HCT116 (cell line): ENCODE measurements at regions of chr12 and their contacts with region 1.

Region 1: GRCh38 chr12:14239350-14239934 is 126.0 kb upstream of the ATF7IP start:
- DNase-seq: no peak
- ATAC-seq: peak; percentile 67; the same call in 1 of the 2 replicates
- H3K4me3 ChIP-seq: no peak overlapping the region
- H3K27ac ChIP-seq: no peak overlapping the region
- H3K4me1 ChIP-seq: no peaks in the 10 kb centered on the region; a peak in 1 of 4 replicates
- H3K27me3 ChIP-seq: no peaks in the 10 kb centered on the region
- CTCF ChIP-seq: no peak
- POLR2A ChIP-seq: no peak
- RAD21 ChIP-seq: no peak

Region 2: DNA sequence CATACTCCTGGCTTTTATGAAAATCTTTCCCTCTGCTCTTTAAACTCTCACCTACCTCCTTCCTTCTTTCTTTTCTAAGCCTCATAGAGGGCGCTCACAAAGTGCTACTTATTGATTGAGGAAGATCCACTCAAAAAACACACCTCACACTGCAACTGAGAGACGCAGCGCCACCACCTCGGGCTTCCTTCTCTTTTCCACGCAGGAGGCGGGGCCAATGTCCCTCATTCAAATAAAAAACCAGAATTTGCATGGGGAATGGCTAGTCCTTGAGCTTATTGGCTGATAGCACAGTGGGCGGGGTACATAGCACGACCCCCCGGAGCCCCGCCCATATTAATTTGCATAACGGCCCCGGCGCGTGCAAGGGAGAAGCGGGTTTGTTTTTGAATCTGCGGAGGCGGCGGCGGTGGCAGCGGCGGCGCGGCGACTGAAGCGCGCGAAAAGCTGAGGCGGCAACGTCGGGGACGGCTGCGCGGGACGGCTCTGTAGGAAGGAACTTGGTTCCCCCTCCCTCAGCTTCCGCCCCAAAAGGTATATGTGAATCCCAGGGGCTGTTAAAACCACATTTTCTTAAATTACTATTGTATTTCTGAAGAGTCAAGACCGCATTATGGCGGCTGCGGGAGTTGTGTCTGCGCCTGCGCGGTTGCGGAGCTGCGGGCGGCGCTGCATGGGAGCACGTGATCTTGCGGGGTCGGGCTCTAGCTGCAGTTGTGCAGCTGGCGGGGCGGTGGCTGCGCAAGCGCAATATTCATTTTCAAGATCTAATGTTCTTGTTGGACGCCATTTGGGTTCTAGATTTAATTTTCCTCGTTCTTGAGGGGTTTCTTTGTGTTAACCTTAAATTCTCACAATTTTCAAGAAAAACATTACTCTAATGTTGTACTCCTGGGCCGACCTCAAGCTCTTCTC is 126.1 kb after region 1 on chr12 and contains the start of gene ATF7IP:
- CTCF ChIA-PET with region 1: interaction called, 9 read pairs
- POLR2A ChIA-PET with region 1: interaction called, 3 read pairs
- RAD21 ChIA-PET with region 1: interaction called, 4 to 8 read pairs
- intact Hi-C with region 1: loop called (anchors 1 kb)
- DNase-seq: peak; percentile 90
- ATAC-seq: peak; percentile 96
- H3K4me3 ChIP-seq: peak within 1 kb of the TSS; percentile 50 to 51
- H3K27ac ChIP-seq: peak within 1 kb of the TSS; percentile 99
- H3K4me1 ChIP-seq: peaks cover 2 to 25% of the 10 kb centered on the region in 2 experiments; a peak in 3 of 4 replicates
- H3K27me3 ChIP-seq: no peaks in the 10 kb centered on the region
- CTCF ChIP-seq: peak; percentile 15 to 41 (median 36); a peak in 3 of 6 replicates
- POLR2A ChIP-seq: no peak
- RAD21 ChIP-seq: peak; percentile 35
- total RNA-seq, gene ATF7IP: 38.6 TPM

Region 3: DNA sequence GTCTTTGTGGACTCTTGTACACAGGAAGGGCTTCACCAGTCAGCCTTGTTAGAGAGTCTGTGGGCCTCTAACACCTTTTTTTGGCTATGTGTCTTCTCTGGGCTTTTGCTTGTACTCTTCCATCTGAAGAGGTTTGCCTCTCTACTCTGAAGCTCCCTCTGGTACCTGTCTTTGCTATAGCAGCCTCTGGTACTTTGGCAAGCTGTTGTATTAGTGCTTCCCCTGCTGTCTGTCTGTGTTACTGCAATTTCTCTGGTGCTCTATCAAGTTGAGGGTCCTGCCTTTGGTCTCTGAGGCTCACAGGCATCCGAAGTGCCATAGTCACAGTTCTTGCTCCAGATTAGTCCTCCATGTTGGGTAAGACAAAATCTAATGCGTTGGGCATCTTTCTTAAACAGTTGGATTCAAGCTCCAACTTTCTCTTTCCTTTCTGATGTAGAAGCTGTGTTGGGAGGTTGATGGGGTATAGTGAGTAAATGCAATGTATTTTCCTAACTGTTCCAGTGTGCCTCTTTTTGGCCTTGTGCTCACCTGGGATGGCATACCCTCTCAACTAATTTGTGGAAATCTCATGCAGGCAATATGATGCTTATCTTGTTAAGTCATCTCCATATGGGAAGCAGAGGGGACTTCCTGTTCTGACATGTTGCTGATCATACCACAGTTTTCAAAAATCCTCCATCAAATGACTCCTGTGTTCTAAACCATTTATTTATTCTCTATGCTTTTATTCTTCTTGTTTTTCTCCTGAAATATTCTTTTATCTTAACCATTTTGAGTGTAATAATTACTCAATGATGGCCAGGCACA is 214.9 kb after region 1 on chr12:
- CTCF ChIA-PET with region 1: interaction called, 51 read pairs
- POLR2A ChIA-PET with region 1: no interaction called
- RAD21 ChIA-PET with region 1: interaction called, 6 to 10 read pairs
- intact Hi-C with region 1: loop called (anchors 1 kb)
- DNase-seq: peak; percentile 59
- ATAC-seq: peak; percentile 88
- H3K4me3 ChIP-seq: no peak overlapping the region
- H3K27ac ChIP-seq: no peak overlapping the region
- H3K4me1 ChIP-seq: no peaks in the 10 kb centered on the region
- H3K27me3 ChIP-seq: no peaks in the 10 kb centered on the region
- CTCF ChIP-seq: peak; percentile 86 to 98 (median 88)
- POLR2A ChIP-seq: no peak
- RAD21 ChIP-seq: peak; percentile 91

Region 4: DNA sequence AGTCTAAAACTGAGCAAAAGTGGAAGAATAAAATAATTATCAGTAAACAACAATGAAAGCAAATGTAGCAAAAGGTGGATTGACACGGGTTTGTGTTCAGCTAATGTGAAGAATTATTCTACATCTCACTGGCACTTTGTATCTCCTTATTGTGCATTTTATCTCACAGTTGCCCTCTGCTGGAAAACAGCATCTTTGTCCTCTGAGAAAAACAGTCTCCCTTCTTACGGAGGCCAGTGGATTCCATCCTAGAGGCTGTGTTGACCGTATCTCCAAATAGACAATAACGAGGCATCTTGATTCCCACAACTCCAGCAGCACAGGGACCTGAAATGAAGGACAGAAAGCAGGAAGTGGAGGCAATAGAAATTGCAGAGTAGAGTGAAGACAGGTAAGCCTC is 379.5 kb after region 1 on chr12:
- CTCF ChIA-PET with region 1: interaction called, 26 read pairs
- POLR2A ChIA-PET with region 1: no interaction called
- RAD21 ChIA-PET with region 1: interaction called in 1 of 2 experiments, 3 read pairs
- intact Hi-C with region 1: loop called (anchors 2 kb)
- DNase-seq: no peak
- ATAC-seq: peak; percentile 67; the same call in 1 of the 2 replicates
- H3K4me3 ChIP-seq: no peak overlapping the region
- H3K27ac ChIP-seq: no peak overlapping the region
- H3K4me1 ChIP-seq: no peaks in the 10 kb centered on the region
- H3K27me3 ChIP-seq: no peaks in the 10 kb centered on the region
- CTCF ChIP-seq: peak; percentile 30 to 47 (median 46); a peak in 4 of 6 replicates
- POLR2A ChIP-seq: no peak
- RAD21 ChIP-seq: peak; percentile 58

Region 5: DNA sequence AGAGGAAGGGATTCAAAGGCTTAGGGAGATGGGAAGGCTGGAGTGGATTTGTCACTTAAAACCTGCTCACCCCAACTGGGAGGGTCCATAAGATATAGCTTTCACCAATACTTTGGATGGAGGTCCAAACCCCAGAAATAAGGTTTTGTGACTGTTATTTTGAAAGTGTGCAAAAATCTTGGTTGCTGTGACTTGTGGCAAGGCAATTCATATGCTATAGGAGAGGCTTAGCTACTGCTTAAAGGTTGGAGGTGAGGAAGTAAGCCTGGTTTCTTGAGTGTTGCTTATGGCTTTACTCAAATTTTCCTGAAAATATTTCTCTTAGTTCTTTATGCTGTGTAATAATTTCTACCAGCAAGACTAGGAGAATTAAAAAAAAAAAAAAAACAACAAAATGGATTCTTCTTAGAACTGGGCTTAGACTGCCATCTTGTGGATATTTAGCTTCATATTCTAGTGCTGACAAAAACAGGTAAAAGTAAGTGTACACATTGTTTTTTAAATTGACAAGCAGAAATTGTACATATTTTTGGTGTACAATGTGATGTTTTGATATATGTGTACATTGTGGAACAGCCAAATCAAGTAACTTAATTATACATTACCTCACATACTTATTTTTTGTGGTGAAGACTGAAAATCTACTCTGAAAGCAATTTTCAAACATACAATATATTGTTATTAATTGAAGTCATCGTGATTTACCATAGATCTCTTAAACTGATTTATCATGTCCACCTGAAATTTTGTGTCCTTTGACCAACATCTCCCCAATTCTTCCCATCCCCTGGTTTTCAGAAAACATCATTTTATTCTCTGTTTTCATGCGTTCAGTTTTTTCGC is 756.4 kb after region 1 on chr12:
- CTCF ChIA-PET with region 1: interaction called, 4 read pairs
- POLR2A ChIA-PET with region 1: no interaction called
- RAD21 ChIA-PET with region 1: no interaction called
- intact Hi-C with region 1: loop called (anchors 2 kb)
- DNase-seq: peak; percentile 63
- ATAC-seq: peak; percentile 34; the same call in 1 of the 2 replicates
- H3K4me3 ChIP-seq: no peak overlapping the region
- H3K27ac ChIP-seq: no peak overlapping the region
- H3K4me1 ChIP-seq: no peaks in the 10 kb centered on the region
- H3K27me3 ChIP-seq: peaks cover 6% of the 10 kb centered on the region
- CTCF ChIP-seq: peak; percentile 37 to 76 (median 71); a peak in 5 of 6 replicates
- POLR2A ChIP-seq: no peak
- RAD21 ChIP-seq: peak; percentile 81